ENCODE measurements at regions of chr6 and their contacts with region 1.

Region 1: DNA sequence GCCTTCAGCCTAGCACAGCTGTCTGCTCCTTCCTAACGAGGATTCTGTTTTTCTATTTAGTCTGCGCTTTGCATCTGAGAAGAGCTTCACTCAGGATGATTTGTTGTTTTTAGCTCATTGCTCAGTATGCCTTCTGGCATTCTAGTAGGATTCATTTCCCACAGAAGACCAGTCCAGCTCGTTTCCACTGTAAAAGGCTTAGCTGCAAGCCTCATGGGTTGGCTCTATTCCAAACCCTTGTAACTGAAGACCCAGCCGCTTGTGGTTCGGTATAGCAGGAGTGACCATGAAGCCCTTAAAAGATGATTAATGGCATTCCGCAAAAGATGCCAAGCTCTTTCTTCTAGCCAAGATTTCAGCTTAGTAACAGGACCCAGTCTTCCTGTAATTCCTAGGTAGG is 7.2 kb downstream of the ADGRF1 start:
- DNase-seq: no peak
- H3K4me3 ChIP-seq: no peak overlapping the region; a peak in 1 of 8 replicates
- H3K27ac ChIP-seq: no peak overlapping the region
- H3K4me1 ChIP-seq: peaks cover 0 to 4% (median under 1%) of the 10 kb centered on the region in 4 experiments; a peak in 2 of 7 replicates
- H3K27me3 ChIP-seq: no peaks in the 10 kb centered on the region
- CTCF ChIP-seq: no peak
- EP300 ChIP-seq: no peak
- POLR2A ChIP-seq: no peak
- RAD21 ChIP-seq: no peak

Region 2: GRCh38 chr6:47023573-47023972 is 11.3 kb before region 1 on chr6:
- CTCF ChIA-PET with region 1: interaction called, 12 read pairs
- POLR2A ChIA-PET with region 1: no interaction called
- DNase-seq: no peak
- H3K4me3 ChIP-seq: no peak overlapping the region
- H3K27ac ChIP-seq: no peak overlapping the region
- H3K4me1 ChIP-seq: no peaks in the 10 kb centered on the region
- H3K27me3 ChIP-seq: peaks cover 0 to 1% (median 0%) of the 10 kb centered on the region in 4 experiments; a peak in 1 of 7 replicates
- CTCF ChIP-seq: no peak
- EP300 ChIP-seq: no peak
- POLR2A ChIP-seq: no peak
- RAD21 ChIP-seq: no peak